ENCODE measurements at regions of chr11 and their contacts with region 1.

Region 1: GRCh38 chr11:133134314-133135173 is 397.8 kb downstream of the OPCML start:
- DNase-seq: peak; percentile 77 to 83
- H3K4me3 ChIP-seq: no peak overlapping the region
- H3K27ac ChIP-seq: no peak overlapping the region
- H3K4me1 ChIP-seq: peaks cover 0 to 7% (median 3%) of the 10 kb centered on the region in 4 experiments; a peak in 3 of 7 replicates
- H3K27me3 ChIP-seq: no peaks in the 10 kb centered on the region
- CTCF ChIP-seq: peak; percentile 92 to 99 (median 97)
- EP300 ChIP-seq: no peak
- POLR2A ChIP-seq: no peak
- RAD21 ChIP-seq: peak; percentile 95

Region 2: DNA sequence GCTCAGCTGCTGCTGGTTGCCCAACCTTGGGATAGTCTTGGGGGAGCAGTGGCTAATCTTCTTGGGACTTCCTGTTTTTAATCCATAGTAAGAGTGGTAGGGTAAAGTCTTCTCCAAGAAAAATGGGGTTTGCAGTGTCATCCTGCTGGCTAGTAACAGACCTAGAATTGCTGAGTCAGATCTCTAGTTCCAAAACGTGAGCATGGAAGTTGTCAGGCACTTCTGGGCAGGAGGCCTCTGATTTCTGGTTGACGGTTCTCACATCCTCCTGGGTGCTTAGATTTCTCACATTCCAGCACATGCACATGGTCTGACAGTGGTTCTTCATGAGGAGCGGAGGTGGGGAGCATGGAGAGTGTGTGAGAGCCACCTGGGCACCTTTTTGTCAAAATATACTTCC is 12.3 kb before region 1 on chr11:
- CTCF ChIA-PET with region 1: interaction called, 16 read pairs
- POLR2A ChIA-PET with region 1: no interaction called
- DNase-seq: no peak
- H3K4me3 ChIP-seq: no peak overlapping the region
- H3K27ac ChIP-seq: no peak overlapping the region
- H3K4me1 ChIP-seq: peaks cover 0 to 4% (median 1%) of the 10 kb centered on the region in 4 experiments; a peak in 2 of 7 replicates
- H3K27me3 ChIP-seq: no peaks in the 10 kb centered on the region
- CTCF ChIP-seq: no peak
- EP300 ChIP-seq: no peak
- POLR2A ChIP-seq: no peak
- RAD21 ChIP-seq: no peak

Region 3: GRCh38 chr11:133149698-133150097 is 15.2 kb after region 1 on chr11:
- CTCF ChIA-PET with region 1: interaction called, 84 read pairs
- POLR2A ChIA-PET with region 1: no interaction called
- DNase-seq: no peak
- H3K4me3 ChIP-seq: no peak overlapping the region
- H3K27ac ChIP-seq: no peak overlapping the region
- H3K4me1 ChIP-seq: peaks cover 0 to 2% (median 0%) of the 10 kb centered on the region in 4 experiments; a peak in 2 of 7 replicates
- H3K27me3 ChIP-seq: no peaks in the 10 kb centered on the region
- CTCF ChIP-seq: peak in 1 of 3 experiments; percentile 12; a peak in 1 of 4 replicates
- EP300 ChIP-seq: no peak
- POLR2A ChIP-seq: no peak
- RAD21 ChIP-seq: no peak

Region 4: DNA sequence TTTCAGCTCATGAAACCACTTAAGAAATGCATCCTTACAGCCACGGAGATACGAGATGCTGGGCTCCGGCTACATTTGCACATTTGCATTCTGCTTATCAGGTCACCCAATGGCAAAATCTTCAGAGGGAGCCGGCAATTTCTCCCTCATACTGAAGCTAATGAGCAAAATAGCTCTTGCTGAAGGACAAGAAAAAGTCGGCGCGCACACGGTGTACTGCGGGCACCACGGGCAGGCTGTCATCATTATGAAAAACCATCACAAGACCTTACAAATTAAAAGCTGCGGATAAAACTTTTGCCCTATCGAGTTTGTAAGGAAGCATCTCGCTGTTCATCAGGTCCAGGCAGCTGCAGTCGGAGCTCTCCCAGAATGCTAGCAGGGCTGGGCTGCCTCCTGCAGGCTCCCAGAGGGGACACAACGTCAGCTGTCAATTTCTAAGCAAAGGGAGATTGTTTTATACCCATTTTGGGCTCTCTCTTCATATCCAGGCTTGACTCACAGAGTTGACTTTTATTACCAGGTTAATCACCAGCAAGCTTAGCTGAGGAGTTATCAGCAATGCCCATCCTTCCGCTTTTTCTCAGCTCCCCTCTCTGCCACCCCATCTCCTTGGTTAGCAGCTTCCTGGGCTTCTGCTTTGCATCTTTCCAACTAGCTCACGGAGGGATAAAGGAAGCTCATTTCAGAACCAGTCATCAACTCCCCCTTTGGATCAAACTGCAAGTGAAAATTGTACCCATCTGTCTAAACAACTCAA is 22.6 kb after region 1 on chr11:
- CTCF ChIA-PET with region 1: interaction called, 84 read pairs
- POLR2A ChIA-PET with region 1: interaction called, 4 read pairs
- DNase-seq: no peak
- H3K4me3 ChIP-seq: no peak overlapping the region
- H3K27ac ChIP-seq: no peak overlapping the region
- H3K4me1 ChIP-seq: peaks cover 0 to 4% (median 2%) of the 10 kb centered on the region in 4 experiments; a peak in 3 of 7 replicates
- H3K27me3 ChIP-seq: no peaks in the 10 kb centered on the region
- CTCF ChIP-seq: peak; percentile 77 to 85 (median 80)
- EP300 ChIP-seq: no peak
- POLR2A ChIP-seq: no peak
- RAD21 ChIP-seq: peak; percentile 82 to 88

Region 5: GRCh38 chr11:133163463-133164419 is 29.2 kb after region 1 on chr11:
- CTCF ChIA-PET with region 1: interaction called, 56 read pairs
- POLR2A ChIA-PET with region 1: no interaction called
- DNase-seq: no peak
- H3K4me3 ChIP-seq: no peak overlapping the region
- H3K27ac ChIP-seq: no peak overlapping the region
- H3K4me1 ChIP-seq: peaks cover 2 to 5% (median 4%) of the 10 kb centered on the region in 4 experiments; a peak in 5 of 7 replicates
- H3K27me3 ChIP-seq: no peaks in the 10 kb centered on the region
- CTCF ChIP-seq: peak in 2 of 3 experiments; percentile 74 to 79; a peak in 3 of 4 replicates
- EP300 ChIP-seq: no peak
- POLR2A ChIP-seq: no peak
- RAD21 ChIP-seq: peak; percentile 73 to 74

Region 6: GRCh38 chr11:133175103-133175502 is 40.6 kb after region 1 on chr11:
- CTCF ChIA-PET with region 1: no interaction called
- POLR2A ChIA-PET with region 1: no interaction called
- DNase-seq: no peak
- H3K4me3 ChIP-seq: no peak overlapping the region
- H3K27ac ChIP-seq: no peak overlapping the region
- H3K4me1 ChIP-seq: no peaks in the 10 kb centered on the region
- H3K27me3 ChIP-seq: no peaks in the 10 kb centered on the region
- CTCF ChIP-seq: no peak
- EP300 ChIP-seq: no peak
- POLR2A ChIP-seq: no peak
- RAD21 ChIP-seq: no peak

Region 7: DNA sequence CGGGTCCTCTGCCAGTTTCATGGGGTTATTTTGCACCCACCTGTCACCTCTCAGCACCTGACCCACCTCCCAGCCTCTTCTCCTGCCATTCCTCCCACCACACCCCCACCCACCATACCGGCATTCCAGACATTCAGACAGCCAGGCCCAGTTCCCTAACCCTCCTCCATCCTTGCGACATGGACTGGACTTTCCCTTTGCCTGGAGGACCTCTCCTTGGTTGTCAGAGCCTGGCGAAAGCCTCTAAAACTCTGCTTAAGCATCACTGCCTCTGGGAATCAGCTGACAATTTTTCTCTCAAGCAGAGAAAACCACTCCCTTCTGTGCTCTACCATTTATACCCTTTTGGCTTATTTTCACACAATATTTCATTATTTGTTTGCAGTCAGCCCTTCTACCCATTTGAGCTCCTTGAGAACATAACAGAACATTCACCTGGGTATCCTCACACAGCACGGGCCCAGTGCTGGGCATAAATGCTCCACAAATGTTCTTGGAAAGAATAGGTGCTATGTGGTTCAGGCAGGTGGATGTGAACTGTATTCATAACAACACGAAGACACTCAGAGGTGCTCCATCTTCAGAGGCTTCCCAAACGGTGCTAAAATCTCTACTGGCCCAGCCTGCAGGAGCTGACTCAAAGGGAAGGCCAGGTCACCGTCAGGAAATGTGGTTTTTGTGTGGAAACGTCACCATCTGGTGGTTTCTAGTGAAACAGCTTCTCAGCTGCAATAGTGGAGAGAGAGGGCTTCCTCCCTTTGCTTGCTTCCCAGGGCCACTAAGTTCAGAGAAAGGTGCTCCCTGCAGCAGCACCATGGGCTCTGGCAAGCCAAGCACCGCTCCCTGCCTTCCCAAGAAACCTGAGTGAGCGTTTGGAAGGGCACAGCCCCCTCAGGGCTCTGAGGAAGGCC is 700.4 kb after region 1 on chr11:
- CTCF ChIA-PET with region 1: interaction called, 21 read pairs
- POLR2A ChIA-PET with region 1: no interaction called
- DNase-seq: peak; percentile 68 to 78
- H3K4me3 ChIP-seq: no peak overlapping the region
- H3K27ac ChIP-seq: no peak overlapping the region
- H3K4me1 ChIP-seq: peaks cover 0 to 2% (median 0%) of the 10 kb centered on the region in 4 experiments; a peak in 3 of 7 replicates
- H3K27me3 ChIP-seq: no peaks in the 10 kb centered on the region
- CTCF ChIP-seq: peak; percentile 58 to 93 (median 89)
- EP300 ChIP-seq: no peak
- POLR2A ChIP-seq: no peak
- RAD21 ChIP-seq: peak; percentile 97

Measured in H1 (cell line).